Endothelial cell of umbilical vein (primary cell): ENCODE measurements at regions of chr4 and their contacts with region 1.

Region 1: GRCh38 chr4:95267081-95267480 is 281.7 kb downstream of the UNC5C start:
- DNase-seq: peak; percentile 68
- H3K4me3 ChIP-seq: no peak overlapping the region
- H3K27ac ChIP-seq: peak overlapping the region; percentile 78
- H3K4me1 ChIP-seq: peaks cover 25% of the 10 kb centered on the region
- H3K27me3 ChIP-seq: no peaks in the 10 kb centered on the region
- CTCF ChIP-seq: no peak
- POLR2A ChIP-seq: no peak

Region 2: GRCh38 chr4:95232358-95233156 is 34.5 kb before region 1 on chr4:
- CTCF ChIA-PET with region 1: no interaction called
- POLR2A ChIA-PET with region 1: no interaction called
- dilution Hi-C with region 1: no loop called
- intact Hi-C with region 1: loop called (anchors 1 kb)
- DNase-seq: no peak
- H3K4me3 ChIP-seq: no peak overlapping the region
- H3K27ac ChIP-seq: no peak overlapping the region
- H3K4me1 ChIP-seq: no peaks in the 10 kb centered on the region
- H3K27me3 ChIP-seq: no peaks in the 10 kb centered on the region
- CTCF ChIP-seq: no peak
- POLR2A ChIP-seq: no peak

Region 3: GRCh38 chr4:95362906-95363558 is 96.0 kb after region 1 on chr4:
- CTCF ChIA-PET with region 1: no interaction called
- POLR2A ChIA-PET with region 1: no interaction called
- dilution Hi-C with region 1: no loop called
- intact Hi-C with region 1: loop called (anchors 5 kb)
- DNase-seq: peak; percentile 54
- H3K4me3 ChIP-seq: no peak overlapping the region
- H3K27ac ChIP-seq: peak overlapping the region; percentile 1
- H3K4me1 ChIP-seq: peaks cover 10% of the 10 kb centered on the region
- H3K27me3 ChIP-seq: no peaks in the 10 kb centered on the region
- CTCF ChIP-seq: peak in 1 of 2 donors; percentile 20
- POLR2A ChIP-seq: no peak

Region 4: DNA sequence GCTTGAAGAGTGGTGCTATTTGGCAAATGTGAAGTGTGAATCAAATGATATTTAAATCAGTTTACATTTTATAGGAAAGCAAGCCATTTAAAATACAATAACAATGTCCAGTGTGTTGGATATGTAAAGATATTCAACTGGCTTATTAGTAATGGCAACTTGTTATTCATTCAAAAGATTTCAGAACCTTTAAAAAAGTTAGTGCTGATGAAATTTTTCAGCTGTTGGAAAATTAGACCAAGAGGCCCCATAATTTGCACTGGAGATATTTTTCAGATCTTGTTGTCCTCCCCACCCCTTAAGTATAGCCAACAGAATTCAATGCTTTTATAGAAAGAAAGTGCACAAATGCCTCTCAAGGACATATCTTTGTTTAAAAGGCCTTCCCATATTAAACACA is 227.1 kb after region 1 on chr4:
- CTCF ChIA-PET with region 1: no interaction called
- POLR2A ChIA-PET with region 1: no interaction called
- dilution Hi-C with region 1: no loop called
- intact Hi-C with region 1: no loop called
- DNase-seq: no peak
- H3K4me3 ChIP-seq: no peak overlapping the region
- H3K27ac ChIP-seq: no peak overlapping the region
- H3K4me1 ChIP-seq: no peaks in the 10 kb centered on the region
- H3K27me3 ChIP-seq: no peaks in the 10 kb centered on the region
- CTCF ChIP-seq: no peak
- POLR2A ChIP-seq: no peak